Heart left ventricle (tissue), 16 donors: ENCODE measurements at regions of chr10 and their contacts with region 1.

Region 1: DNA sequence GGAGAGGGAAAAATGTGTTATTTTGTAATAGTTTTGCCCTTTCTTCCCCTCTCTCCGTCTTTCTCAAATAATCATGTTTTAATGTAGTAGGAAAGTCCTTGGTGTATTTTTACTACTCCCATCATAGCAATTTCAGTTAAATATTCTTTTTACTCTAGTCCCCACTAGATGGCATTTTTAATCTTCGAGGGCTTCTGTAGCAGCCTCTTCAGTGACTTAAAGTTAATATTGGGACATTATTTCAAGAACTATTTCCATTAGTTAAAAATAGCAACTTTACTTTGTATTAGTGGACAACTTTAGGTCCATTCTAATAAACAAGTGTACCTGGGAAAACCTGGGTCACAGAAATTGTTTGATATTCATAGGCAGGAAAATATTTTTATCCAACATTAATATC is 23.0 kb downstream of the EDRF1 start:
- DNase-seq: no peak
- ATAC-seq: no peak
- H3K4me3 ChIP-seq: no peak overlapping the region
- H3K27ac ChIP-seq: no peak overlapping the region
- H3K4me1 ChIP-seq: no peaks in the 10 kb centered on the region
- H3K27me3 ChIP-seq: no peaks in the 10 kb centered on the region
- CTCF ChIP-seq: peak in 1 of 12 donors; percentile 10
- POLR2A ChIP-seq: no peak

Region 2: GRCh38 chr10:125707541-125708468 is 34.7 kb before region 1 on chr10:
- intact Hi-C with region 1: no loop called
- DNase-seq: no peak
- ATAC-seq: peak in 2 of 4 donors; percentile 65 to 77
- H3K4me3 ChIP-seq: no peak overlapping the region
- H3K27ac ChIP-seq: no peak overlapping the region
- H3K4me1 ChIP-seq: peaks cover 0 to 5% (median 0%) of the 10 kb centered on the region in 12 donors
- H3K27me3 ChIP-seq: no peaks in the 10 kb centered on the region
- CTCF ChIP-seq: no peak
- POLR2A ChIP-seq: no peak

Region 3: DNA sequence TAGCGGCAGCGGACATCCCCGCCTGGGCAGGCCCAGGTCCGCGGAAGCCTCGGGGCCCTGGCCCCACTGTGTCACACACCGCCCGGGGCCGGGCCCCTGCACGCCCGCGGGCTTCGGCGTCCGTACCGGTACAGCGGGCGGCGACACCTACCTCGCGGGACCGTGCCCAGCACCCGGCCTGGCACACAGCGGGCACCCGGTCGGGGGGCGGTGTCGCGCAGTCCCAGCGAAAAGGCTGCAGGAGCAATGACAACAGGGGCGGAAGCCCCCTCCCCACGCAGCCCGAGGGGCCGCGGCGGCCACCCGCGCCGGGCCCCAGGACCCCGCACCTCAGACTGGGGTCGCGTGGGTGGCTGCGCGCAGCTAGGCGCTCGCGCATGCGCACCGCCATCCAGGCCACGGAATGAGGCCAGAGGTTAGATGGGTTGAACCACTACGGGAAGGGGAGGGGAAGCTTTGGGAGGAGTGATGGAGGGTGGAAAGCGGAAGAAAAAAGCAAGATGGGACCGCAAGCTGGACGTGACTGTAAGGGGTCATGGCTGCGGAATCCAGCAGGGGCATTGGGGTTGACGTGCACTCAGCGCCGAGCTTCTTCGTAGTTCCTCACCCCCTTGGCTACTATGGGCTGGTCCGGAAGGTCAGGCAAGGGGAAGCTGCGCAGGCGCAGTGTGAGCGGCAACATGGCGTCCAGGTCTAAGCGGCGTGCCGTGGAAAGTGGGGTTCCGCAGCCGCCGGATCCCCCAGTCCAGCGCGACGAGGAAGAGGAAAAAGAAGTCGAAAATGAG is 80.6 kb after region 1 on chr10 and contains the starts of genes BCCIP and UROS:
- intact Hi-C with region 1: loop called in 1 of 10 experiments (anchors 10 kb)
- DNase-seq: peak; percentile 91 to 97 (median 92)
- ATAC-seq: peak; percentile 85 to 96 (median 94)
- H3K4me3 ChIP-seq: peak within 1 kb of the TSS; percentile 71 to 99 (median 95)
- H3K27ac ChIP-seq: peak within 1 kb of the TSS; percentile 83 to 97 (median 90)
- H3K4me1 ChIP-seq: peaks cover 6 to 44% (median 32%) of the 10 kb centered on the region in 12 donors
- H3K27me3 ChIP-seq: no peaks in the 10 kb centered on the region
- CTCF ChIP-seq: peak in 2 of 12 donors; percentile 11 to 18
- POLR2A ChIP-seq: peak in 1 of 2 donors; percentile 52
- total RNA-seq, gene BCCIP: 31.3 to 62.2 (median 44.4) TPM
- total RNA-seq, gene UROS: 50.5 to 81.4 (median 68.5) TPM

Region 4: DNA sequence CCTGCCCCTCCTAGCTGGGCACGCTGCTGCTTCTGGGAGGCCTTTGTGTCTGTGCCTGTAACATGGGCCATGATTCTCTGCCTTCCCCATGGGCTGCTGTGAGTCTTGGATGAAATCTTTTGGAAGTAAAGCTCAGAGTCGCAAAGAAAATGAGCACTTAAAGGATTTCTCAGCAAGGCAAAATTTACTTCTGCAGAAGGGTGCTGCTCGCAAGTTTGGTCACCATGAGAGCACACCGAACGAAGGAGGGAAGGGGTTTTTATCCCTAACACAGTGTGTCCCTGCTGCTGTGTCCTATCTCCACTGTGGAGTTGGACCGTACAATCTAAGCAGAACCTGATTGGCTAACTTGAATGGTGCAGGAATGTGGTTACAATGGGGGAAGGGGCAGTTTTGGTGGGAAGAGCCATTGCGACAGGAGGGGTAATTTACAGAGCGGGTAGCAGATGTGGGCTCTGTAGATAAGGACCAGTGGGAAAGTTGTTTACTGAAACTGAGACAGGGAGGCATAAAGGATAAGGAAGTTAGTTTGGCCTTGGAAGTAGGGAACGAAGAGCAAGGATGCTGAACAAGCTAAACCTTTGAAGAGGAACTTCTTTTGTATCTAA is 211.4 kb after region 1 on chr10:
- intact Hi-C with region 1: no loop called
- DNase-seq: no peak
- ATAC-seq: no peak
- H3K4me3 ChIP-seq: no peak overlapping the region
- H3K27ac ChIP-seq: no peak overlapping the region
- H3K4me1 ChIP-seq: no peaks in the 10 kb centered on the region
- H3K27me3 ChIP-seq: no peaks in the 10 kb centered on the region
- CTCF ChIP-seq: no peak
- POLR2A ChIP-seq: no peak

Region 5: DNA sequence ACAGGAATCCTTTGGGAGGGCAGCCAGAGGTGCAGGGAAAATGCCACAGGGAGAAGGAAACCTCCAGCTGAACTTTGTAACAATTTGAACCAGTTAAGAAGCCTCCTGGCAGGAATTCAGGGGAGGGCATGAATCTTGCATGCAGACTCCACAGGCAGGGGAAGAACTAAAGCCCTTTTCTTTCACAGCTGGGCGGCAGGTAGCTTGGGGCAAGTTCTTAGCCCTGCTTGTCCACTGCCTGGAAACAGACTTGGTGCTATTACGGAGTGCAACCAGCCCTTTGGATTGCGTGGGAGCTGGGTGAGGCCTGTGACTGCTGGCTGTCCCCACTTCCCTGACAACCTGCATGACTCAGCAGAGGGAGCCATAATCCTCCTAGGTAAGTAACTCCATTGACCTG is 697.5 kb after region 1 on chr10:
- intact Hi-C with region 1: no loop called
- DNase-seq: no peak
- ATAC-seq: no peak
- H3K4me3 ChIP-seq: no peak overlapping the region
- H3K27ac ChIP-seq: no peak overlapping the region
- H3K4me1 ChIP-seq: no peaks in the 10 kb centered on the region
- H3K27me3 ChIP-seq: no peaks in the 10 kb centered on the region
- CTCF ChIP-seq: no peak
- POLR2A ChIP-seq: no peak